ENCODE measurements at regions of chr1 and their contacts with region 1.

Region 1: GRCh38 chr1:245156081-245156735 is 1.4 kb downstream of the KIF26B start:
- DNase-seq: peak; percentile 47 to 93
- H3K4me3 ChIP-seq: peak overlapping the region; percentile 32 to 73 (median 49)
- H3K27ac ChIP-seq: no peak overlapping the region
- H3K4me1 ChIP-seq: peaks cover 0 to 21% (median 8%) of the 10 kb centered on the region in 4 experiments; a peak in 5 of 7 replicates
- H3K27me3 ChIP-seq: peaks cover 28 to 55% (median 45%) of the 10 kb centered on the region in 4 experiments
- CTCF ChIP-seq: peak; percentile 70 to 82 (median 71)
- EP300 ChIP-seq: no peak
- POLR2A ChIP-seq: no peak
- RAD21 ChIP-seq: peak; percentile 79 to 89

Region 2: GRCh38 chr1:245074232-245074747 is 81.9 kb before region 1 on chr1:
- CTCF ChIA-PET with region 1: no interaction called
- POLR2A ChIA-PET with region 1: no interaction called
- DNase-seq: no peak
- H3K4me3 ChIP-seq: no peak overlapping the region
- H3K27ac ChIP-seq: no peak overlapping the region
- H3K4me1 ChIP-seq: no peaks in the 10 kb centered on the region
- H3K27me3 ChIP-seq: no peaks in the 10 kb centered on the region
- CTCF ChIP-seq: no peak
- EP300 ChIP-seq: no peak
- POLR2A ChIP-seq: no peak
- RAD21 ChIP-seq: no peak

Region 3: DNA sequence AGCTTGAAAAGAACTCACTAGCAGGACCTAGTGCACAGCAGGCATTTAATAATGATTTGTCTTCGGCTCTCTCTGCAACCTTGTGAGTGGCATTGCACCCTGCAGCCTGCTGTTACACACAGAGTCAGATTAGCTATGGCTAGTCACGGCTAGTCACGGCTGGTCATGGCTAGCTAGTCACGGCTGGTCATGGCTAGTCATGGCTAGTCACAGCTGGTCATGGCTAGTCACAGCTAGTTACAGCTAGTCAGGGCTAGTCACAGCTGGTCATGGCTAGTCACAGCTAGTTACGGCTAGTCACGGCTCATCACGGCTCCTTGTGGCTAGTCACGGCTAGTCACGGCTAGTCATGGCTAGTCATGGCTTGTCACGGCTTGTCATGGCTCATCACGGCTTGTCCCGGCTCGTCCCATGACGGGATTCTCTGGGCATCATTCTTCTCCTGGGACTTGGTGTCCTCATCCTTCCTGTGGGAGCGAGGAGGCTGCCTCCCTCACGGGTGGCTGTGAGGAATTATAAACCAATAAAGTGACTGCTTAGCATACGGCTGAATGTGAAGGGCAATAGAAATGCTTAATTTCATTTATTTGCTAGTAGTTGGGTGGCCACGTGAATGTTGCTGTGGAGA is 13.9 kb before region 1 on chr1:
- CTCF ChIA-PET with region 1: interaction called, 37 read pairs
- POLR2A ChIA-PET with region 1: no interaction called
- DNase-seq: no peak
- H3K4me3 ChIP-seq: no peak overlapping the region
- H3K27ac ChIP-seq: no peak overlapping the region
- H3K4me1 ChIP-seq: no peaks in the 10 kb centered on the region
- H3K27me3 ChIP-seq: no peaks in the 10 kb centered on the region
- CTCF ChIP-seq: no peak
- EP300 ChIP-seq: no peak
- POLR2A ChIP-seq: no peak
- RAD21 ChIP-seq: no peak

Region 4: DNA sequence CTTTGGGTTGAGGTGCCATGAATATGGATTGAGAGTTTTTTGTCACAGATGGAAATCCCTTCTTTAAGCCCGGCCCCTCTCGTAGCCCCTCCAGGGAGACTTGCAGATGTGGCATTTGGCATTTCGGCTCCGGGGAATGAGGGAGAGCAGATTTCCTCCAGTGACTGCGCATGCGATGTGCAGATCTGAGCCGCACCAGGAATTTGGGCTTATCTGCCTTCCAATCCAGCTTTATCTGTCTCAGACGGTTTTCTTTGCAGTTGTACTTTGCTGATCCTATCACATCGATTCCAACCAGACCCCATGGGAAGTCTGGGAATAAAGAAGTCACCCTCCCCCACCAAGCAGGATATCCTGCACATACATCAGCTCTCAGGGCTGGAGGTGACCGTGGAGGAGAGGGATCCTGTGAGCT is 10.3 kb after region 1 on chr1:
- CTCF ChIA-PET with region 1: interaction called, 40 read pairs
- POLR2A ChIA-PET with region 1: no interaction called
- DNase-seq: no peak
- H3K4me3 ChIP-seq: peak overlapping the region in 1 of 4 experiments; percentile 16; a peak in 1 of 8 replicates
- H3K27ac ChIP-seq: no peak overlapping the region
- H3K4me1 ChIP-seq: peaks cover 0 to 2% (median under 1%) of the 10 kb centered on the region in 4 experiments; a peak in 2 of 7 replicates
- H3K27me3 ChIP-seq: no peaks in the 10 kb centered on the region
- CTCF ChIP-seq: no peak
- EP300 ChIP-seq: no peak
- POLR2A ChIP-seq: no peak
- RAD21 ChIP-seq: no peak

Region 5: DNA sequence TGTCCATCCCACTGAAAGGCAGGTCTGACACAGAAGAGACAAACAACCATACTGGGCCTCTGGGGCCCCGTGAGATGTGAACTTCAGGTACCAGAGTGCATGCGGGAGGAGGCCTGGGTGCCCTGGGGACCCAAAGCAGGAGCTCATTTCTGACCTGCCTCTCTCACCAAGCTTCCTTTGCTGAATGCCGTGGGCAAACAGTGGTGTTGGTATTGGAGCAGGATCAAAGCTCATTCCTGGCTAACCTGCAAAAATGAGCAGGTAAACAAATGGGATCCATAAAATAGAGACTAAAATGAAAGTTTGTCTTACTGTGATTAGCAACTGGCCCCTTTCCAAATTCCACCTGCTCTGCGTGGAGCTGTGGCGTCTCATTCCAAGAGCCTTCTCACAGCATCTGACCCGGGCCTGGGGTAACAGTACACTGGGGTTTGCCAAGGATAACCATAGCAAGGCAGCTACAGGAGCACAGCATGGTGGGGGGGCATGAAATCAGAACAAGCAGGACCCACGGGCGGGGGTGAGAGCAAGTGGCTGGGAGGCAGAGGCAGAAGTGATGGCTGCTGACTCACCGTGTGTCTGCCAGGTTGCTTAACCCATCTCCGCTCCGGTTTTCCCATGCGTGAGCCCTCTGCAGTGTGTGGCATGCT is 102.2 kb after region 1 on chr1:
- CTCF ChIA-PET with region 1: interaction called, 12 read pairs
- POLR2A ChIA-PET with region 1: no interaction called
- DNase-seq: peak in 1 of 2 experiments; percentile 35
- H3K4me3 ChIP-seq: no peak overlapping the region
- H3K27ac ChIP-seq: no peak overlapping the region
- H3K4me1 ChIP-seq: peaks cover 7 to 15% (median 10%) of the 10 kb centered on the region in 4 experiments; a peak in 6 of 7 replicates
- H3K27me3 ChIP-seq: no peaks in the 10 kb centered on the region
- CTCF ChIP-seq: no peak
- EP300 ChIP-seq: no peak
- POLR2A ChIP-seq: no peak
- RAD21 ChIP-seq: no peak

Region 6: DNA sequence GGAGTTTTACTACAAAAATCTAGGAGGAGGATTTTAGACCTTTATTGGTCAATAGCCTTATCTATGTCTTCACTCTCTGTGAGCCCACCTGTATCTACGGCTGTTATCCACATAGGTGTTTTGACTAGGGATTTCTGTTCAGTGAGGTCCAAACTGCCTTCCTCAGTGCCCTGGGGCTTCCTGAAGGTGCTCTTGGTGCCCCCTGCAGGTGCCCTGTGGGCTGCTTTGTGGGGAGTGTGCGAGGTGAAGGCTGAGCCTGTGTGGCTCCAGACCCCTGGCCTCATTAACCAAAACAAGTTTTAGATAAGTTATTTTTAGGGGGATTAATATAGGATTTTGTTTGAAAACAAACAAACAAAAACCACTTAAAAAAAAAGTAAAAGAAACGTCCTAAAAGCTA is 121.1 kb after region 1 on chr1:
- CTCF ChIA-PET with region 1: interaction called, 13 read pairs
- POLR2A ChIA-PET with region 1: no interaction called
- DNase-seq: peak; percentile 27 to 60
- H3K4me3 ChIP-seq: no peak overlapping the region
- H3K27ac ChIP-seq: no peak overlapping the region
- H3K4me1 ChIP-seq: no peaks in the 10 kb centered on the region
- H3K27me3 ChIP-seq: no peaks in the 10 kb centered on the region
- CTCF ChIP-seq: peak; percentile 61 to 67 (median 62)
- EP300 ChIP-seq: no peak
- POLR2A ChIP-seq: no peak
- RAD21 ChIP-seq: peak; percentile 72 to 84

Region 7: GRCh38 chr1:245380790-245381535 is 224.8 kb after region 1 on chr1:
- CTCF ChIA-PET with region 1: interaction called, 33 read pairs
- POLR2A ChIA-PET with region 1: interaction called, 4 read pairs
- DNase-seq: peak in 1 of 2 experiments; percentile 57
- H3K4me3 ChIP-seq: no peak overlapping the region
- H3K27ac ChIP-seq: no peak overlapping the region
- H3K4me1 ChIP-seq: peaks cover 3 to 9% (median 7%) of the 10 kb centered on the region in 4 experiments
- H3K27me3 ChIP-seq: no peaks in the 10 kb centered on the region
- CTCF ChIP-seq: peak in 2 of 3 experiments; percentile 57 to 64; a peak in 3 of 4 replicates
- EP300 ChIP-seq: no peak
- POLR2A ChIP-seq: no peak
- RAD21 ChIP-seq: peak; percentile 81 to 85

Region 8: GRCh38 chr1:245453541-245453940 is 297.3 kb after region 1 on chr1:
- CTCF ChIA-PET with region 1: no interaction called
- POLR2A ChIA-PET with region 1: no interaction called
- DNase-seq: no peak
- H3K4me3 ChIP-seq: no peak overlapping the region
- H3K27ac ChIP-seq: no peak overlapping the region
- H3K4me1 ChIP-seq: peaks cover 2 to 8% (median 2%) of the 10 kb centered on the region in 4 experiments; a peak in 3 of 7 replicates
- H3K27me3 ChIP-seq: no peaks in the 10 kb centered on the region
- CTCF ChIP-seq: no peak
- EP300 ChIP-seq: no peak
- POLR2A ChIP-seq: no peak
- RAD21 ChIP-seq: no peak

Measured in H1 (cell line).